ENCODE measurements at regions of chr1 and their contacts with region 1.

Region 1: DNA sequence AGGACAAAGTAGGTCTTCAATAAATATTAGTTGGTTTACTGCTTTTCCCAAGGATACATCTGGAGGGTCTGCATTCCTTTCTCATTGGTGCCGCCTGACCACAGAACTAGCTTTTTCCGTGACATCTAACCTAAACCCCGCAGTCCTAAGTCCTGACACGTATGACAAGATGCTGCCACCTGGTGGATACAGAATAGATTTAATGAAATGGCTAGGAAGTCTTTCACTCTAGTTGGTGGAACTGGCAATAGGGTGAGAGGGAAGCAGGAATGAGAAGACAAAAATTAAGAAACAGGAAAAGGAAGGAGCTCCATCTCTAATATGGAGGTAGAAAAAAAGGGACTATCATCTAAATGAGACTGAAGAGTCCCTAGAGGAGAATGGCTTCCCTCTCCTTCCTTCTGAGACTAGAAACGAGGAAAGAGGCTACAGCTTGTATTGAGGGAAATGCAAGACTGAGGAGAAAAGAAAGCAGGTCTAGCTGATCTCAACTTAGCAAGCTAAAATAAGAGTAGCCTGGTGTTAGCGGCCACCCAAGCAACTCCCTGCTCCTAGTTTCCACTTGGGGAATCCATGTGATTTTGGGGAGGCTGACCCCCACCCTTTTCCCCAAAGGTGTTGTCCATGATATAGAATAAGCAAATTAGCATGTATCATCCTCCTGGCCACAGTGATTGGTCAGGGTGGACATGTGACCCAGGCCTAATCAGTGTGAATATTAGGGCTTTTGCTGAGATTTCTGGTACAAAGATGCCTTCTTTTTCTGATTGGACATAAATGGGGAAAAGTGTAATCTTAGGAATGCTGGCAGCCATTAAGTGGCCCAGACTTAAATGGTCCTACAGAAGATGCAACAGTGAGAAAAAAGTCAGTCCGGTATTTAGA is 5.9 kb downstream of the RFX5 start:
- DNase-seq: peak; percentile 72
- H3K4me3 ChIP-seq: no peak overlapping the region
- H3K27ac ChIP-seq: peak overlapping the region; percentile 68
- H3K27me3 ChIP-seq: no peaks in the 10 kb centered on the region
- CTCF ChIP-seq: peak; percentile 64

Region 2: GRCh38 chr1:151254217-151255213 is 86.6 kb before region 1 on chr1 and contains the start of gene PSMD4:
- CTCF ChIA-PET with region 1: interaction called, 10 read pairs
- POLR2A ChIA-PET with region 1: no interaction called
- DNase-seq: peak; percentile 88
- H3K4me3 ChIP-seq: peak within 1 kb of the TSS; percentile 84
- H3K27ac ChIP-seq: peak within 1 kb of the TSS; percentile 83
- H3K27me3 ChIP-seq: no peaks in the 10 kb centered on the region
- CTCF ChIP-seq: no peak
- polyA plus RNA-seq, gene PSMD4: 258 and 275 TPM in 2 replicates

Region 3: DNA sequence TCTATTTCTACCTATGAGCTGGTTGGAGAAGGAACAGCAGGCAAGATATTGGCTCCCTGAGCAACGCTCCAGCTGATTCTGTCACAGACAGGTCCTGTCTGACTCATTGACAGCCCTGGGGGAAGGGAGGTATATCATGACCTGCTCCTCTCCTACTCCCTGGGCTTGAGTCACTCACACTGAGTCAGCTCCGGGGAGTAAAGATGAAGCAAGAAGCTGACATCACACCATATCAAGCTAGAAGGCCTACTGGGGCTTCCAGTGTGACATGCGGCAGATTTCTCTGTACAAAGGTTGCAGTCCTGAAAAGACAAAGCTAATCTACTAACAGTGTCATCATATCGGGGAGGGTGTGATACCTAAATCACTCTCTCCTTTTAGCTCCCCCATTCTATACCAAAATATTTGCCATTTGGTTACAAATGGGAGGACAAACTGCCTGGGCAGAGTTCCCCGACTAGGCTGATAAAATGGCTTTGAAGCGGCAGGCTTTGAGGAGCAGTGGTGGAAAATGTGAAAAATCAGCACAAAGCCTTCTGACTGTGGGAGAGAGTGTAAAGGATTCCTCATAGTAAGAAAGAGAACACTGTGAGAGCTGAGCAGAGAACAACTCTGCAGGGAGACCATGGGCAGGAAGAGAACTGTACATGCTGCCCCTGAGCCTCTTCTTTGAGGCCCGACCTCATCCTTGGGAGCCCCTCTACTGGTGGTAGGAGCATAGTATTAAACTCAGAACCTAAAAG is 29.4 kb before region 1 on chr1:
- CTCF ChIA-PET with region 1: interaction called, 427 read pairs
- POLR2A ChIA-PET with region 1: interaction called, 3 read pairs
- DNase-seq: peak; percentile 97
- H3K4me3 ChIP-seq: no peak overlapping the region
- H3K27ac ChIP-seq: peak overlapping the region; percentile 99
- H3K27me3 ChIP-seq: no peaks in the 10 kb centered on the region
- CTCF ChIP-seq: no peak

Region 4: DNA sequence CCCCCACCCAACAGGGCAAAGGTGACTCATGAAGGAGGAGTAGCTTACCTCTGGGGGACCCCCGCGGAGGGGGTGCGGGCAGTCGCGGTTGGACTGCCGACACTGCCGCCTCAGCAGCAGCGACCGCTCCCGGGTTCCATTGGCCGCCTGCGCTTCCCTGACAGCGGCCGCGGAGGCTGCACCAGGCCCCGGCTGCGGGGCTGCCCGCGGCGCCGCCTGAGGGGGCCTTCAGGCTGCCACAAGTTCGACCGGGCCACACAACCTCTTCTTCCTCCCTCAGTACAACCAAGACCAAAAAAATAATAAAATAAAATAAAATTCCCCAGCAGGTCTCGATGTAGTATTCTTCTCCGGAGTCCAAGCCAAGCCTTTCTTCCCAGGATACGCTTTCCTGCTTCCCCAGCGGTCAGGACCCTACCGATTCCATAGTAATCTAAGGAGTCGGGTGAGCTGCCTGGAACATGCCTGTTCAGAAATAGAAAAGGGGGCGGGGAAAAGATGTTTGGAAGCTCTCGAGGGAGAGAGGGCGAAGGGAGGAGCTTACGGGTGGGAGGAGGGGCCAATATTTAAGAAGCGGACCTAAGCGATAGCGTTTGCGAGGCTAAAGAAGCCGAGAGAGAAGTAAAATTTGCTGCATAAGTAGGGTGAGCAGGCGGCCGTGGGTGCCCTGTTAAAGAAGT is 13.7 kb before region 1 on chr1 and contains the start of gene PI4KB:
- CTCF ChIA-PET with region 1: interaction called, 199 read pairs
- POLR2A ChIA-PET with region 1: interaction called, 4 read pairs
- DNase-seq: peak; percentile 93
- H3K4me3 ChIP-seq: peak within 1 kb of the TSS; percentile 84
- H3K27ac ChIP-seq: peak within 1 kb of the TSS; percentile 95
- H3K27me3 ChIP-seq: no peaks in the 10 kb centered on the region
- CTCF ChIP-seq: no peak
- polyA plus RNA-seq, gene PI4KB: 75.2 and 83.2 TPM in 2 replicates

Region 5: GRCh38 chr1:151372061-151372934 is 31.2 kb after region 1 on chr1 and contains the start of gene SELENBP1:
- CTCF ChIA-PET with region 1: interaction called, 13 read pairs
- POLR2A ChIA-PET with region 1: no interaction called
- DNase-seq: peak; percentile 38
- H3K4me3 ChIP-seq: peak within 1 kb of the TSS; percentile 70
- H3K27ac ChIP-seq: peak within 1 kb of the TSS; percentile 31
- H3K27me3 ChIP-seq: no peaks in the 10 kb centered on the region
- CTCF ChIP-seq: no peak
- polyA plus RNA-seq, gene SELENBP1: 85.0 and 102 TPM in 2 replicates

Region 6: DNA sequence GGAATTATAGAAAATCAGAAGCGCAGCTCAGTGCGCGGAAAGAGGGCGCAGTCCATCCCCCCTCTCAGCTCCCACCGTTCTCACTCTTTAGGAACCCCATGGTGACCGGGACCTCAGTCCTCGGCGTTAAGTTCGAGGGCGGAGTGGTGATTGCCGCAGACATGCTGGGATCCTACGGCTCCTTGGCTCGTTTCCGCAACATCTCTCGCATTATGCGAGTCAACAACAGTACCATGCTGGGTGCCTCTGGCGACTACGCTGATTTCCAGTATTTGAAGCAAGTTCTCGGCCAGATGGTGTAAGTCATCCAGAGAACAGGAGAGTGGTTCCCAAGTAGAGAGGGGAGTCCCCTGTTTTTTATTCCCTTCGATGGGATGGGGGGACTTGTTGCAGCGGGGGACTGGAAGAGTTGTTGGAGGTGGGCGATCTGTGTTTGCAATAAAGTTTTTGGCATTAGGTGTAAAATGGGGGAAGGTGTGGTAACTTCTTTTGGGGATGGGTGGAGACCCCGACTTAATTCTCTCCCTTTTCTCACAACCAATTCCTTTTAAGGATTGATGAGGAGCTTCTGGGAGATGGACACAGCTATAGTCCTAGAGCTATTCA is 58.9 kb after region 1 on chr1:
- CTCF ChIA-PET with region 1: interaction called, 16 read pairs
- POLR2A ChIA-PET with region 1: no interaction called
- DNase-seq: no peak
- H3K4me3 ChIP-seq: peak overlapping the region; percentile 97
- H3K27ac ChIP-seq: peak overlapping the region; percentile 81
- H3K27me3 ChIP-seq: no peaks in the 10 kb centered on the region
- CTCF ChIP-seq: no peak

Region 7: GRCh38 chr1:151668090-151668489 is 327.0 kb after region 1 on chr1:
- CTCF ChIA-PET with region 1: no interaction called
- POLR2A ChIA-PET with region 1: no interaction called
- DNase-seq: no peak
- H3K4me3 ChIP-seq: no peak overlapping the region
- H3K27ac ChIP-seq: no peak overlapping the region
- H3K27me3 ChIP-seq: no peaks in the 10 kb centered on the region
- CTCF ChIP-seq: no peak